Right lobe of liver (tissue), 6 donors: ENCODE measurements at regions of chr9 and their contacts with region 1.

Region 1: DNA sequence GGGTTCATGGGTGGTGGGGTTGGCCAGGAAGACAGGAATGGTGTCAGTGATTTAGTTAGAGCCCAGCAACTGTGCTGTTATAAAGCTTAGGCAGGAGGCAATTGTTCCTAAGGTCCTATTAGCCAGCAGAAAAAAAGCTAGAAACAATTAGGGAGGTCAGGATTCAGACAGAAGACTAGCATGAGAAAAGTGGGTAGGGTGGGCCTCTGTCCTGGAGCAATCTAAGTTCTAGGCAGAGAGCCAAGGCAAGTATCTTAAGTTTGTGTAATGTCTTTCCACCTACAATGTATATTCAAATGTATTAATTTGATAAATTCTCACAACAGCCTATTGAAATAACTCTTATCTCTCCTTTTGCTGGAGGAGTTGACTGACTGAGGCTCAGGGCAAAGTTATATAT is 6.1 kb upstream of the ZFAND5 start:
- DNase-seq: no peak
- ATAC-seq: no peak
- H3K4me3 ChIP-seq: no peak overlapping the region
- H3K27ac ChIP-seq: no peak overlapping the region
- H3K4me1 ChIP-seq: no peaks in the 10 kb centered on the region
- H3K27me3 ChIP-seq: no peaks in the 10 kb centered on the region
- CTCF ChIP-seq: no peak
- POLR2A ChIP-seq: no peak

Region 2: GRCh38 chr9:72586388-72587130 is 215.4 kb after region 1 on chr9:
- intact Hi-C with region 1: loop called in 1 of 2 experiments (anchors 10 kb)
- DNase-seq: peak in 1 of 3 donors; percentile 33
- ATAC-seq: peak; percentile 56 to 91 (median 63)
- H3K4me3 ChIP-seq: no peak overlapping the region
- H3K27ac ChIP-seq: peak overlapping the region in 2 of 3 donors; percentile 9 to 17
- H3K4me1 ChIP-seq: peaks cover 0 to 14% (median 0%) of the 10 kb centered on the region in 4 donors
- H3K27me3 ChIP-seq: no peaks in the 10 kb centered on the region
- CTCF ChIP-seq: peak in 2 of 4 donors; percentile 12 to 27
- POLR2A ChIP-seq: no peak